ENCODE measurements at regions of chr11 and their contacts with region 1.

Region 1: DNA sequence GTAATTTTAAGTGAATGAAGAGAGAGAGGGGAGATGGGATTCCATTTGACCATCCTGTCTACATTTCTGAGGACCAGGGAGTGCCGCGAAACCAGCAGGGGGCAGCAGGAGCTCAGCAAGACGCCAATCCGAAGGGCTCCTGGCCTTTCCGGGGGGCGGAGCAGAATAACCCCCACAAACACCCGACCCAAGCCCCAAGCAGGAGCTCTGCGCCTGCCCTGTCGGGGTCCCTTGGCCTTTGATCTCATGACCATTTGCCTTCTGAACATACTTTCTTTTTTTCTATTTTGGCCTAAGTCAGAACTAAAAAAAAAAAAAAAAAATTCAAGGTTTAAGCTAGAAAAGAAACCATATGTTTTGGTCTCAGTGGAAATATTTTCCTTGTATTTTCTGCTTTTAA is 21.9 kb upstream of the SCN2B start:
- DNase-seq: peak; percentile 44
- ATAC-seq: peak; percentile 88
- H3K4me3 ChIP-seq: no peak overlapping the region
- H3K27ac ChIP-seq: no peak overlapping the region
- H3K4me1 ChIP-seq: no peaks in the 10 kb centered on the region
- H3K27me3 ChIP-seq: peaks cover 4% of the 10 kb centered on the region
- CTCF ChIP-seq: peak; percentile 77
- POLR2A ChIP-seq: no peak
- RAD21 ChIP-seq: peak; percentile 73

Region 2: DNA sequence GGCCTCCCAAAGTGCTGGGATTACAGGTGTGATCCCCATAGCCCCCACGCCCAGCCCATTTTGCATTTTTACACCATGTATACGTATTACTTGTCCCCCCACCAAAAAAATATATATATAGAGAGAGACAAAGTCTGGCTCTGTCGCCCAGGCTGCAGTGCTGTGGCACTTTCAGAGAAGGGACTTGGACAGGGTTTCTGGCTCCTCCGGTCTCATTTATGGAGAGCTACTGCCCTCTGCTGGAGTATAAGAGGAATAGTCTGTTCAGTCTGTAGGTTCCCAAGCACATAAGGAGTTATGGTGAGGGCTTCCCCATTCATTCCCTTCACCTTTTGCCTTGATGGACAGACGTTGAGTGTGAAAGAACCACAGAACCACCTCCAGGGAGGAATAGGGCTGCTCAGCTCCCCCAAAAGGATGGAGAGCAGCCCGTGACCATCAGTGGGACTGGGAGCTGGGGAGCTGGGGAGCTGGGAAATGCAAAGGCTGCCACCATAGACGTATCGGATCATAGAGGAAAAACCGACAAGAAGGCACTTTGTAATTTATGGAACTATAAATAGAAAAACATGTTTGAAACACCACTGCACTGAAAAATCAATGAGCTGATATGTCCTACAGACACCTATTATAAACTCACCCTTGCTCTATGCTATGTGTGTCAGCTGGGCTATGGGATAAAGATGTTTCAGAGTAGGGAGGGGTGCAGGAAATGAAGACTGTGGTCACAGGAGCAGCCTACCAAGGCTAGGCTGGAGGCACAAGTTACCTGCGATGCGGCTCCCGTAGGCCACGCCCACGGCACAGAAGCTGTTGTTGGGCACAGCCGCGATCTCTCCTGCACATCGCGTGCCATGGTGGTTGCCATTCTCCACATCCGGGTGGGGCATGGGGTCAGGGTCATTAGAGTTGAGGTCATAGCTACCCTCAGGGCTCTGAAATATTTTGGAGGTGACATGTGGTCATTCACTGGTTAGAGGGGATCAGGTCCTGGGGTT is 971.7 kb before region 1 on chr11:
- CTCF ChIA-PET with region 1: no interaction called
- POLR2A ChIA-PET with region 1: no interaction called
- dilution Hi-C with region 1: no loop called
- in situ Hi-C with region 1: no loop called
- intact Hi-C with region 1: no loop called
- DNase-seq: peak; percentile 78
- ATAC-seq: peak; percentile 79
- H3K4me3 ChIP-seq: no peak overlapping the region
- H3K27ac ChIP-seq: no peak overlapping the region
- H3K4me1 ChIP-seq: peaks cover 9% of the 10 kb centered on the region
- H3K27me3 ChIP-seq: no peaks in the 10 kb centered on the region
- CTCF ChIP-seq: peak; percentile 84
- POLR2A ChIP-seq: no peak
- RAD21 ChIP-seq: peak; percentile 87

Region 3: GRCh38 chr11:118353084-118353710 is 154.8 kb after region 1 on chr11:
- CTCF ChIA-PET with region 1: interaction called, 11 read pairs
- POLR2A ChIA-PET with region 1: no interaction called
- dilution Hi-C with region 1: no loop called
- in situ Hi-C with region 1: loop called (anchors 5 kb)
- intact Hi-C with region 1: loop called (anchors 1 kb)
- DNase-seq: peak; percentile 5
- ATAC-seq: no peak
- H3K4me3 ChIP-seq: no peak overlapping the region
- H3K27ac ChIP-seq: no peak overlapping the region
- H3K4me1 ChIP-seq: no peaks in the 10 kb centered on the region
- H3K27me3 ChIP-seq: peaks cover 11% of the 10 kb centered on the region
- CTCF ChIP-seq: peak; percentile 63
- POLR2A ChIP-seq: no peak
- RAD21 ChIP-seq: peak; percentile 45

Region 4: DNA sequence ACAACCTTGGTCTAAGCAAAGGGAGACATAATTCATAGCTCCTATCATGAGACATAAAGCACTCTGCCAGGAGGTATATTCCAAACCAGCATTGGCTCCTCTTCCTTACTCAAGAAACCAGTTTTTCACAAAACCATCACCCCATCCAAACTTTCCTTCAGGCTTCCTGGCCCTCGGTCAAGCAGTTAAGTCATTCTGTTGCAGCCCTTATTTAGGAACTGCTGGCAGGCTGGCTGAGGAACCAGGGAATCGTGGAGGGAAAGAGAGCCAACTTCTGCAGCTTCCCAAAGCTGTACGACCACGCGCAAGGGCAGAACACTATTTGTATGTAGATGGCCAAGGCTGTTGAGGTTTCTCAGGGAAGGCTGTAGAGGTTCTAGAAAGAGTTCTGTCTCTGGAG is 366.7 kb after region 1 on chr11:
- CTCF ChIA-PET with region 1: no interaction called
- POLR2A ChIA-PET with region 1: no interaction called
- dilution Hi-C with region 1: no loop called
- in situ Hi-C with region 1: no loop called
- intact Hi-C with region 1: loop called (anchors 5 kb)
- DNase-seq: no peak
- ATAC-seq: no peak
- H3K4me3 ChIP-seq: no peak overlapping the region
- H3K27ac ChIP-seq: no peak overlapping the region
- H3K4me1 ChIP-seq: peaks cover 2% of the 10 kb centered on the region; the same call in 1 of the 2 replicates
- H3K27me3 ChIP-seq: no peaks in the 10 kb centered on the region
- CTCF ChIP-seq: no peak
- POLR2A ChIP-seq: no peak
- RAD21 ChIP-seq: no peak